Ascending aorta (tissue), 2 donors: ENCODE measurements at regions of chr9 and their contacts with region 1.

Region 1: GRCh38 chr9:114238891-114239875 is 83.7 kb upstream of the ORM1 start:
- DNase-seq: no peak
- H3K4me3 ChIP-seq: peak overlapping the region in 1 of 2 donors; percentile 19
- H3K27ac ChIP-seq: peak overlapping the region; percentile 35 to 70
- H3K4me1 ChIP-seq: peaks cover 11 to 34% of the 10 kb centered on the region in 2 donors
- H3K27me3 ChIP-seq: no peaks in the 10 kb centered on the region
- CTCF ChIP-seq: peak in 2 of 3 experiments; percentile 23 to 48

Region 2: GRCh38 chr9:114174876-114175771 is 64.1 kb before region 1 on chr9:
- intact Hi-C with region 1: loop called (anchors 2 kb)
- DNase-seq: peak in 1 of 2 donors; percentile 85
- H3K4me3 ChIP-seq: peak overlapping the region in 1 of 2 donors; percentile 9
- H3K27ac ChIP-seq: peak overlapping the region; percentile 77 to 91
- H3K4me1 ChIP-seq: peaks cover 14 to 72% of the 10 kb centered on the region in 2 donors
- H3K27me3 ChIP-seq: no peaks in the 10 kb centered on the region
- CTCF ChIP-seq: no peak

Region 3: GRCh38 chr9:114214173-114214572 is 25.0 kb before region 1 on chr9:
- intact Hi-C with region 1: loop called (anchors 2 kb)
- DNase-seq: peak; percentile 34 to 91
- H3K4me3 ChIP-seq: no peak overlapping the region
- H3K27ac ChIP-seq: peak overlapping the region; percentile 82 to 86
- H3K4me1 ChIP-seq: peaks cover 23 to 26% of the 10 kb centered on the region in 2 donors
- H3K27me3 ChIP-seq: no peaks in the 10 kb centered on the region
- CTCF ChIP-seq: no peak

Region 4: GRCh38 chr9:114276908-114277821 is 38.0 kb after region 1 on chr9:
- intact Hi-C with region 1: loop called (anchors 1 kb)
- DNase-seq: peak; percentile 2 to 56
- H3K4me3 ChIP-seq: no peak overlapping the region
- H3K27ac ChIP-seq: no peak overlapping the region
- H3K4me1 ChIP-seq: peaks cover 0 to 11% of the 10 kb centered on the region in 2 donors
- H3K27me3 ChIP-seq: no peaks in the 10 kb centered on the region
- CTCF ChIP-seq: no peak